ENCODE measurements at regions of chr16 and their contacts with region 1.

Region 1: DNA sequence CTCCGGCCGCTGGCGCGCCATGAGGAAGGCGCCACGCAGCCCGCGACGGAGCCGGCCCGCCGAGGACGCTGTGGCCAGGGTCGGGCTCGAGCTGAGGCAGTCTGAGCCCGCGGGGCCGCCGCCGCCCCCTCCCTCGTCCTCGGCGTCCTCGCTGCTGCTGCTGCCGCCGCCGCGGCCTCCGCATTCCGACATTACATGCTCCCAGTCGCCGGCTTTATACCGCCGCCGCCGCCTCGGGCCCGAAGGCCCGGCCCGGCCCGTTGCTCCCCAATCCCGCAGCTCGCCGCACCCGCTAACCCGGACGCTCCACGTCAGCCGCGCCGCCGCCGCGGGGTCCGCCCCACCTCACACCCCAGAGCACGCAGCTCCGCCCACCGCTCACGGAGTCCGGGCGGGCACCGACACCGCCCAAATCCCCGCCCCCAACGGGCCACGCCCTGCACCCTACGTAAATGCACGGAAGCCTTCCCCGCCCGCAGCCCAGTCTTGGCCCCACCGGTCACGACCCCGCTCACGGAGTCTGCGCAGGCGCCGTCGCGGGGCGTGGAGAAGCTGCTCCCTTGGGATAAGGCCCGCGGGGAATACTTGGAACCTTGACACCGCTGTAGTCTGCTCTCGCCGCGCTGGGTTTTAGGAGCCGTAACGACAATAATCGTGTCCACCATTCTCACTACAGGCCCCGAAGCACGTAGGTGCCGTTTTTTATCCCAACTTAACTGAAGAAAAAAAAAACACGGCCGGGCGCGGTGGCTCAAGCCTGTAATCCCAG is at the start of gene TXNDC11:
- H3K4me3 Mint-ChIP-seq: peak within 1 kb of the TSS; percentile 92
- H3K27ac Mint-ChIP-seq: peak within 1 kb of the TSS; percentile 96
- H3K4me1 Mint-ChIP-seq: peaks cover 54% of the 10 kb centered on the region
- H3K27me3 Mint-ChIP-seq: no peaks in the 10 kb centered on the region

Region 2: DNA sequence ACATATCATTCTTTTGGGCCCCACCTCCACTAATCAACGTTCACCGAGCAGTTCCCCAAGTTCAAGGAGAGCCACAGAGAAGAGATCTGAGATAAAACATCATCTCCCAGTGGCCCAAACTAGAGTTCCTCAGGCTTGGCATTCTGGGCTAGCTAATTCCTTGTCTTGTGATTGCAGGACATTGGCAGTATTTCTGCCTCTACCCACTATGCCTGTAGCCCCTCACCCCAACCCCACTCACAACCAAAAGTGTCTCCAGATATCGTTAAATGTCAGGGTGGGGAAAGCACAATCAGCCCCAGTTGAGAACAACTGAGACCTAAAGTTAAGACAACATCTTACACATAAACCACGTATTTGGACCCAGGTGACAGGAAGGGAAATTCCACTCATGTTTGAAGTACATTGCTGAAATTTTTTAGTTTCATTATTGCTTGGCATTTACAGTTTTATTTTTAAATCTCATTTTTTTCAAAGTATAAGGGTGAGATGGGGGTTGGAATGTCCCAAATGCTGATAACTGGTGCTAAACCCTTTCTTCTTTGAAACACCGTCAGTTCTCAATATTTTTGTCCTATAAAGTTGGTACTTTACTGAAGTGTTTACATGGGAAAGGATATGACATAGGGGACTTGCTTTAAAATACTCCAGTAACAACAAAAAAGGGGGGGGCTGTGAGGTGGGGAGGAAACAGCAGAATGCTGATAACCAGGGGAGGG is 40.8 kb after region 1 on chr16:
- intact Hi-C with region 1: loop called (anchors 5 kb)
- H3K4me3 Mint-ChIP-seq: peak overlapping the region; percentile 57
- H3K27ac Mint-ChIP-seq: peak overlapping the region; percentile 88
- H3K4me1 Mint-ChIP-seq: peaks cover 42% of the 10 kb centered on the region
- H3K27me3 Mint-ChIP-seq: no peaks in the 10 kb centered on the region

Region 3: GRCh38 chr16:11806721-11807120 is 64.0 kb after region 1 on chr16:
- intact Hi-C with region 1: no loop called
- H3K4me3 Mint-ChIP-seq: no peak overlapping the region
- H3K27ac Mint-ChIP-seq: no peak overlapping the region
- H3K4me1 Mint-ChIP-seq: peaks cover 20% of the 10 kb centered on the region
- H3K27me3 Mint-ChIP-seq: peaks cover 10% of the 10 kb centered on the region

Measured in dendritic cell treated with granulocyte-macrophage colony-stimulating factor and Interleukin-4, amounts not matched to agents 40 ng/mL and 50 ng/mL, for 4 days (primary cell).